ENCODE measurements at regions of chr13 and their contacts with region 1.

Region 1: DNA sequence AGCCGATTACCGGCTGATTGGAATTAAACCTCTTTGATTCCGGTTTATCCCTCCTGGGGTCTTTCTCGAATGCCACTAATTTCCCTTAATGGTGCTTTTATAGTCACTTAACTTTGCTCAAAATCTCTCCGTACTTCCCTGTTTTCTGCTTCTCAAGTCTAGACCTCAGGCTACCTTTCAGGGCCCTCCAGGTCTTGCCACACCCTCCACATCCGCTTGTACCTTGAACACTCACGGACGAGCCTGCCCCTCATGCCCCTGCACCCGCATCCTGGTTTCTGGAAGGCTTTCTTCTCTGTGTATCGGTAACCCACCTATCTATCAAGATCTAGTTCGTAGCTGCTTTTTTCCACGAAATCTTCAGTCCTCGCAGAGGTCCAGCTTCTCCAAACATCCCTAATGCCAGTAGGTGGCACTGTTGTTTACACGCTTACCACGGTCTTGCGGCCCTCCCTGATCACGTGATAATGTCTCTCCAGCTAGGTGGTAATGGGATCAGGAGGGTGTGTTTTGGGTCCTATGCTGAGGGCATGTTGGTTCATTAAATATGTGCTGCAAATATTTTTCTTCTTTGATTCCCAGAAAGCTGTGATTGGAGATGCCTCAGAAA is 13.8 kb downstream of the ATP12A start:
- DNase-seq: peak in 2 of 5 donors; percentile 23 to 32
- H3K4me3 ChIP-seq: no peak overlapping the region
- H3K4me3 Mint-ChIP-seq: peak overlapping the region in 3 of 7 donors; percentile 15 to 52 (median 44)
- H3K27ac ChIP-seq: no peak overlapping the region
- H3K27ac Mint-ChIP-seq: peak overlapping the region in 1 of 8 donors; percentile 21
- H3K4me1 ChIP-seq: peaks cover 6% of the 10 kb centered on the region
- H3K4me1 Mint-ChIP-seq: peaks cover 6 to 12% (median 12%) of the 10 kb centered on the region in 3 donors
- H3K27me3 ChIP-seq: no peaks in the 10 kb centered on the region
- H3K27me3 Mint-ChIP-seq: peaks cover 26 to 65% of the 10 kb centered on the region in 2 donors

Region 2: DNA sequence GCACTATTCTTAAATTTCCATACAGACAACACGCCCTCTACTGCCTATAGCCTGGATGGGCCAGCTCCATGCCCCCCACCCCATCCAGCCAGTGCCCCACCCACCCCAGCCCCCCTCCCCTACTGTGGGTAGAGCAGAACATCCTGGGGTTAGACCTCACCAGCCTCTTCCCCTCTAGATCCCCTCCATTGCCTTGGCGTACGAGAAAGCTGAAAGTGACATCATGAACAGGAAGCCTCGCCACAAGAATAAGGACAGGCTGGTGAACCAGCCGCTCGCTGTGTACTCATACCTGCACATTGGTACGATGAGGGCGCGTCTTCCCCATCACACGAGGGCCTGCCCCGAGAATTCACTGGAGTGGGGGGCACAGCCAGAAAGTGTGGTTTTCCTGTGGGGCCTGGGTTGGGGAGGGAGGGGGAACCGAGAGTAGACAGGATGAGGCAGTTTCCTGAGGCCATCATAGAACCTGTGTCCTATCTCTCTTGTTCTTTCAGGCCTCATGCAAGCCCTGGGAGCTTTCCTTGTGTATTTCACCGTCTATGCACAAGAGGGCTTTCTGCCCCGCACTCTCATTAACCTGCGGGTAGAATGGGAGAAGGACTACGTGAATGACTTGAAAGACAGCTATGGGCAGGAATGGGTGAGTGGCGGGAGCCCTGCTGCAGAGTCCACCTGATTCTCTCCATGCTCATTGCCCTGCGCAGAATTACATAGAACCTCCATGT is 15.4 kb after region 1 on chr13:
- CTCF ChIA-PET with region 1: interaction called, 23 read pairs
- POLR2A ChIA-PET with region 1: interaction called, 3 read pairs
- DNase-seq: peak; percentile 40 to 81 (median 75)
- H3K4me3 ChIP-seq: peak overlapping the region; percentile 28
- H3K4me3 Mint-ChIP-seq: peak overlapping the region in 6 of 7 donors; percentile 62 to 90 (median 76)
- H3K27ac ChIP-seq: no peak overlapping the region
- H3K27ac Mint-ChIP-seq: peak overlapping the region; percentile 46 to 93 (median 83)
- H3K4me1 ChIP-seq: peaks cover 12% of the 10 kb centered on the region
- H3K4me1 Mint-ChIP-seq: peaks cover 13 to 21% (median 14%) of the 10 kb centered on the region in 3 donors
- H3K27me3 ChIP-seq: no peaks in the 10 kb centered on the region
- H3K27me3 Mint-ChIP-seq: peaks cover 0 to 3% of the 10 kb centered on the region in 2 donors